ENCODE measurements at regions of chr2 and their contacts with region 1.

Region 1: GRCh38 chr2:74507145-74507925 is at the start of gene PCGF1:
- DNase-seq: peak; percentile 95 to 99 (median 96)
- ATAC-seq: peak; percentile 80
- H3K4me3 ChIP-seq: peak within 1 kb of the TSS; percentile 78
- H3K27ac ChIP-seq: peak within 1 kb of the TSS; percentile 97
- H3K4me1 ChIP-seq: peaks cover 36 to 55% of the 10 kb centered on the region in 2 experiments; a peak in 4 of 5 replicates
- H3K27me3 ChIP-seq: no peaks in the 10 kb centered on the region
- CTCF ChIP-seq: peak; percentile 42 to 57 (median 54); a peak in 5 of 6 replicates
- EP300 ChIP-seq: peak; percentile 17; the same call in 1 of the 2 replicates
- POLR2A ChIP-seq: peak; percentile 86
- RAD21 ChIP-seq: peak; percentile 15 to 30; a peak in 3 of 4 replicates
- polyA plus RNA-seq, gene PCGF1: 45.3 to 45.7 TPM

Region 2: GRCh38 chr2:74573747-74574562 is 66.6 kb after region 1 on chr2:
- CTCF ChIA-PET with region 1: no interaction called
- POLR2A ChIA-PET with region 1: interaction called, 5 read pairs
- in situ Hi-C with region 1: no loop called
- intact Hi-C with region 1: loop called (anchors 5 kb)
- DNase-seq: peak in 2 of 4 experiments; percentile 63 to 70
- ATAC-seq: peak; percentile 76
- H3K4me3 ChIP-seq: no peak overlapping the region
- H3K27ac ChIP-seq: peak overlapping the region; percentile 43
- H3K4me1 ChIP-seq: peaks cover 0 to 42% of the 10 kb centered on the region in 2 experiments; a peak in 4 of 5 replicates
- H3K27me3 ChIP-seq: no peaks in the 10 kb centered on the region
- CTCF ChIP-seq: no peak; a peak in 1 of 6 replicates
- EP300 ChIP-seq: peak; percentile 48; the same call in 1 of the 2 replicates
- POLR2A ChIP-seq: 0 out of 2 replicates have a peak, but pooled peaks have one; percentile 24
- RAD21 ChIP-seq: no peak; a peak in 1 of 4 replicates

Region 3: DNA sequence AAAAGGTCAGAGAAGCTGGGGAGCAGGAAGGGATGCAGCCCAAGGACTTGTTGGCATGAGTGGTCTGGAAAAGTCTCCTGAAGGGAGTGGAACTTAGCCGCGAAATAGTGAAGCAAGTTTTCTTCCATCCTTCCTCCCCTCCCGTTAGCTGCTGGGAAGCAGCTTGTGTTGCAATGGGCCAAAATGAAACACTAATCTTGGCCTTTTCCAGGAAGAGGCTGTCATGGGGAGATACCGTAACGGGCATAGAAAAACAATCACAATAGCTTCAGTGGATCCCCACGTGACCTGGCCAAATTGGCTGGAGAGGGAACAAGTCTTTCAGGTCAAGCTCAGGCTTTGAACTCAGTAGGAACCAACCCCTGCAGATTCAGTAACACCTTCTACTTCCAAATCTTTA is 196.0 kb after region 1 on chr2:
- CTCF ChIA-PET with region 1: no interaction called
- POLR2A ChIA-PET with region 1: no interaction called
- in situ Hi-C with region 1: no loop called
- intact Hi-C with region 1: no loop called
- DNase-seq: no peak
- ATAC-seq: no peak
- H3K4me3 ChIP-seq: no peak overlapping the region
- H3K27ac ChIP-seq: no peak overlapping the region
- H3K4me1 ChIP-seq: no peaks in the 10 kb centered on the region
- H3K27me3 ChIP-seq: peaks cover 4 to 12% of the 10 kb centered on the region in 2 experiments; a peak in 3 of 5 replicates
- CTCF ChIP-seq: no peak
- EP300 ChIP-seq: no peak
- POLR2A ChIP-seq: no peak
- RAD21 ChIP-seq: no peak